ENCODE measurements at regions of chr13 and their contacts with region 1.

Region 1: DNA sequence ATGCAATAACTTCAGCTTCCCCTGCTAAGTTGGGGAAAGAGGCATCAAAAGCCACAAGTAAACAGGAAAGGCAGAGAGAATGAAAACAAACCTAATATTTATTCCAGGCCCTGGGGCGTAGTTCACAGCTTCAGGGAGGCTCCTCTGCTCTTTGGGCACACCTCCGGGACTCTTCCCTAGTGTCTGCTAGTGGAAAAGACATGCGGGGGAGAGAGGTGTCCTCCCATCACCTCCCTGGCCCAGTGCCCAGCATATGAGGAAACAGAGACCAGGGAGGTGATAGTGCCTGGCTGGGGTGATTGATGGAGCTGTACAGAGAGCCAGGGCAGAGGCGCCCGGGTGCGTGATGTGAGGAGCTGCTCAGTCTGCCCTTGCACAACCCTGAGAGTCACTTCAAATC is 71.0 kb downstream of the RASL11A start:
- DNase-seq: peak; percentile 43

Region 2: GRCh38 chr13:26971990-26972887 is 369.4 kb before region 1 on chr13:
- in situ Hi-C with region 1: loop called (anchors 10 kb)
- DNase-seq: peak; percentile 80

Region 3: DNA sequence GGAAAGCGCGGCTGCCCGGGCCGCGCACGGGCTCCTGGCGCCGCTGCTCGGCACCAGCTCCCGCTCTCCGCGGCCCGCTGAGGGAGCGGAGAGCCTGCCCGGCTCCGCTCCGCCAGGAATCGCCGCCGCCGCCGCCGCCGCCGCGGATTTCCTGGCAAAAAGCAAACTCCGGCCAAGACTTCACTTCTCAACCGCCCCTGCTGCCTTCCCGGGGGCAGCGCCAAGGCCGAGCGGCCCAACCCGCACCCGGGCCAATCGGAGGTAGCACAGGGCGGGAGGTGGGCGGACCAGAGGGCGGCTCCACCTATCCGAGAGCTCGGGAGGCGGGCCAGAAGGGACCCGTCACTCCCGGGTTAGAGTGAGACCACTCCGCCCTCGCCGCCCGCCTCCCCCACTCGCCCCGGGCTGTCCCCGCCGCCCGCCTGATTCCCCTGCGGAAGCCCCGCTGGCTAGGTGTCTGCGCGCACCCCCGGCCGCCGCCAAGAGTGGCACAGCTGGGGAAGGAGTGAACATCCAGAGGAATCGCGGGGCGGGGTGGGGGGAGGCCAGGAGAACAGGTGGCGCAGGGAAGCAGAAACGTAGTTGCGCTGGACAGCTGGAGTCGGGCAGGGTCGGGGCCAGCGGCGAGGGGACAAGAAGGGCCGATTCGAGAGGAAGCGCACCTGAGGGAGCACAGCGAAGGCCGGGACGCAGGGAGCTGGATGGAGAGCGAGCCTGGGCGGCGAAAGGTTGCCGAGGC is 278.9 kb after region 1 on chr13 and contains the start of gene LNX2:
- in situ Hi-C with region 1: no loop called
- DNase-seq: peak; percentile 97

Measured in KBM-7 (cell line).